ENCODE measurements at regions of chr17 and their contacts with region 1.

Region 1: DNA sequence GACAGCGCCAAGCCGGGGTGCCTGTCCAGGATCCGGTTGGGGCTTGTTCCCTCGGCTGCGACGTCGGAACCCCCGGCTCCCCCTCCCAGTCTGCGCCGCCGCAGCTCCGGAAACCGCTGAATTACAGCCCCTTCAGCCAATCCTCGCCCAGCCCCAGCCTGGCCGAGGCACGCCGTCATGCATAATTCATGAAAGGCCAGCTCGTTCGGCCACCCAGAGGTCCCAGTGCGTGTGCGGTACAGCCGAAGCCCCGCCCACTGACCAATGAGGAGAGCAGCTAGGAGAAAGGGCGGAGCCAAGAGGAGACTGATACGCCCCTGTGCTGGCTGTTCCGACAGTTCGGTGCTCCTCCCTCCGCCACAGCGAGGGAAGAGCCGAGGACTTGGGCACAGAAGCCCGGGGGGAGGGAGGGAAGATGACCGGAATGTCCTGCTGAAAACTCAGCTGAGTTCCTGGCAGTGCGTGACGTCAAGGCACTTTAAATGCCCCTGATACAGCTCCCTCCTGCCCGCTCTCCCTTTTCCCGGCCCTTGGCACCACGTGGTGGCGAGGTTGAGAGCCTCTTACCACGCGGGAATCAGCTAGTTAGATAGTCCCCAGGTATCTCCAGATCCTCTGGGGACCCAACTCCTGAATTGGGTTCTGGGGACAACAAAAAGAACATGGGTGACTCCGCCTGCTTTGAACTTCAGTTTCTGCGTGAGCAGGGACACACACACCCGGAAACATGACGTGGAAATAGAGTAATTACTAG is at the start of gene STAT3:
- DNase-seq: peak; percentile 100
- H3K4me3 ChIP-seq: peak within 1 kb of the TSS; percentile 98
- H3K4me3 Mint-ChIP-seq: peak within 1 kb of the TSS; percentile 98
- H3K27ac Mint-ChIP-seq: peak within 1 kb of the TSS; percentile 91
- H3K4me1 ChIP-seq: peaks cover 15% of the 10 kb centered on the region
- H3K4me1 Mint-ChIP-seq: peaks cover 24% of the 10 kb centered on the region
- H3K27me3 ChIP-seq: no peaks in the 10 kb centered on the region
- H3K27me3 Mint-ChIP-seq: no peaks in the 10 kb centered on the region
- CTCF ChIP-seq: no peak
- total RNA-seq, gene STAT3: 72.1 and 73.7 TPM in 2 replicates

Region 2: DNA sequence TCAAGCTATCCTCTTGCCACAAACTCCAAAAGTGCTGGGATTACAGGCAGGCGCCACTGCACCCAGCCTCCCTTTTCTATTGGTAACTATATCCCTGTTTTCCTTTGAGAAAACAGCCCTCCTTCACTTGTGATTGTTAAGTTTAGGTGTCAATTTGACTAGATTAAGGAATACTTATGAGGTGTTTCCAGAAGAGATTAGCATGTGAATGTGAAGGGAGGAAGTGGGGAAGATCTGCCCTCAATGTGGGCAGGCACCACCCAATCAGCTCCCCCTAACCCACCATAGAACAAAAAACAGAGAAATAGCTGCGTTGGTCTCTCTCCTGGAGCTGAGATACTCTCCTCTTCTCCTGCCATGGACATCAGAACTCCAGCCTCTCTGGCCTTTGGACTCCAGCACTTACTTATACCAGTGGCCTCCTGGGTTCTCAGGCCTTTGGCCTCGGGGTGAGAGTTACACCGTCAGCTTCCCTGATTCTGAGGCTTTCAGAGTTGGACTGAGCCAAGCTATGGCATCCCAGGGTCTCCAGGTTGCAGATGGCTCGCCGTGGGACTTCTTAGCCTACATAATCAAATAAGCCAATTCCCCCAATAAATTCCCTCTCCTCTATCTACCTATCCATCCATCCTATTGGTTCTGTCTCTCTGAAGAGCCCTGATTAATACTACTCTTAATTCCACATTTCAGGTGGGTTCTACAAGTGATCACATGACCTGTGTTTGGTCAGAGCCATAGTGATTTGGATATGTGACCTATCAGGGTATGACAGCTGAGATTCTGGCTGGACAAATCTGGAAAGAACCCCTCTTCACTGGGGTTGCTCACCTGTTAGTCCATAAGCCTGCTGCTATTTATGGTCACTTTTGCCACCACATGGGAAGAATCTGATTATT is 11.6 kb after region 1 on chr17:
- CTCF ChIA-PET with region 1: interaction called, 13 read pairs
- POLR2A ChIA-PET with region 1: interaction called, 8 read pairs
- intact Hi-C with region 1: no loop called
- DNase-seq: no peak
- H3K4me3 ChIP-seq: no peak overlapping the region
- H3K4me3 Mint-ChIP-seq: no peak overlapping the region
- H3K27ac Mint-ChIP-seq: no peak overlapping the region
- H3K4me1 ChIP-seq: peaks cover 37% of the 10 kb centered on the region
- H3K4me1 Mint-ChIP-seq: peaks cover 29% of the 10 kb centered on the region
- H3K27me3 ChIP-seq: no peaks in the 10 kb centered on the region
- H3K27me3 Mint-ChIP-seq: no peaks in the 10 kb centered on the region
- CTCF ChIP-seq: no peak

Region 3: GRCh38 chr17:42405963-42406495 is 17.5 kb after region 1 on chr17:
- CTCF ChIA-PET with region 1: interaction called, 10 read pairs
- POLR2A ChIA-PET with region 1: interaction called, 8 read pairs
- intact Hi-C with region 1: no loop called
- DNase-seq: peak; percentile 79 to 88
- H3K4me3 ChIP-seq: no peak overlapping the region
- H3K4me3 Mint-ChIP-seq: no peak overlapping the region
- H3K27ac Mint-ChIP-seq: no peak overlapping the region
- H3K4me1 ChIP-seq: peaks cover 19% of the 10 kb centered on the region
- H3K4me1 Mint-ChIP-seq: peaks cover 41% of the 10 kb centered on the region
- H3K27me3 ChIP-seq: no peaks in the 10 kb centered on the region
- H3K27me3 Mint-ChIP-seq: no peaks in the 10 kb centered on the region
- CTCF ChIP-seq: peak; percentile 86 to 93

Region 4: GRCh38 chr17:42527273-42527703 is 138.7 kb after region 1 on chr17:
- CTCF ChIA-PET with region 1: interaction called, 13 read pairs
- POLR2A ChIA-PET with region 1: interaction called, 6 read pairs
- intact Hi-C with region 1: no loop called
- DNase-seq: peak; percentile 81 to 82
- H3K4me3 ChIP-seq: no peak overlapping the region
- H3K4me3 Mint-ChIP-seq: no peak overlapping the region
- H3K27ac Mint-ChIP-seq: peak overlapping the region; percentile 55
- H3K4me1 ChIP-seq: peaks cover 46% of the 10 kb centered on the region
- H3K4me1 Mint-ChIP-seq: peaks cover 44% of the 10 kb centered on the region
- H3K27me3 ChIP-seq: no peaks in the 10 kb centered on the region
- H3K27me3 Mint-ChIP-seq: no peaks in the 10 kb centered on the region
- CTCF ChIP-seq: peak; percentile 82 to 90

Measured in Caco-2 (cell line).